Prostate gland (tissue), 2 donors: ENCODE measurements at regions of chr16 and their contacts with region 1.

Region 1: GRCh38 chr16:73047518-73048291 is at the start of gene ZFHX3:
- DNase-seq: peak; percentile 78
- H3K4me3 ChIP-seq: peak within 1 kb of the TSS; percentile 79 to 92
- H3K27ac ChIP-seq: peak within 1 kb of the TSS; percentile 97 to 100
- H3K4me1 ChIP-seq: peaks cover 46% of the 10 kb centered on the region
- H3K27me3 ChIP-seq: no peaks in the 10 kb centered on the region
- CTCF ChIP-seq: peak in 1 of 4 experiments; percentile 29
- POLR2A ChIP-seq: peak; percentile 11
- total RNA-seq, gene ZFHX3: 51.1 to 53.9 TPM

Region 2: DNA sequence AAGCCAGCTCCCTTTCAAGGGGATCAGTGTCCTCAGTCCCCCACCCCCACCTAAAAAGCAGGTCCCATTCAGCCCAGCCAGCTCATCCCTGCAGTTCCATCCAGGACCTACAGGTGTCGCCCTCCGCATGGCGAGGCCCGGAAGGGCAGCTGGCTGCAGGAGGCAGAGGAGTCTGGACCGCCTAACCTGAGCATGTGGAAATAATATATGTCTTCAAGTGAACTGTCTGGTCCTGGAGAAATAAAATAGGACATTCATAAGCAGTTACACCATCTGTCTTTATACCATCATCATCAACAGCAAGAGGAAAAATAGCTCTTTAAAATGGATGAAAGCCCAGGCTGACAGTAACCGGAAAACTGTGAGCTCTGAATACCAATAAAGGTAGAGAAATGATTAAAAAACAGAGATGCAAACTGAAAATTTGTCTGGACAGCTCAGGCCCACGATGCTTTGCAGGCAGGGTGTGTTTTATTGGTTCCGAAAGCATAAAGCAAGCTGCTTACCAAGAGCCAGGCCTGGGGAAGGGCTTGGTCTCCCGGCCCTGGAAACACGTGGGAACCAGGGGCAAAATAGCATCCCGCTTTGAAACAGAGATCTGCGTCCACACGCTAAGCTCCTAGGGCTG is 215.0 kb before region 1 on chr16:
- intact Hi-C with region 1: loop called (anchors 5 kb)
- DNase-seq: peak; percentile 79
- H3K4me3 ChIP-seq: no peak overlapping the region
- H3K27ac ChIP-seq: peak overlapping the region; percentile 21 to 34
- H3K4me1 ChIP-seq: peaks cover 6% of the 10 kb centered on the region
- H3K27me3 ChIP-seq: no peaks in the 10 kb centered on the region
- CTCF ChIP-seq: peak; percentile 95 to 97 (median 96)
- POLR2A ChIP-seq: no peak

Region 3: DNA sequence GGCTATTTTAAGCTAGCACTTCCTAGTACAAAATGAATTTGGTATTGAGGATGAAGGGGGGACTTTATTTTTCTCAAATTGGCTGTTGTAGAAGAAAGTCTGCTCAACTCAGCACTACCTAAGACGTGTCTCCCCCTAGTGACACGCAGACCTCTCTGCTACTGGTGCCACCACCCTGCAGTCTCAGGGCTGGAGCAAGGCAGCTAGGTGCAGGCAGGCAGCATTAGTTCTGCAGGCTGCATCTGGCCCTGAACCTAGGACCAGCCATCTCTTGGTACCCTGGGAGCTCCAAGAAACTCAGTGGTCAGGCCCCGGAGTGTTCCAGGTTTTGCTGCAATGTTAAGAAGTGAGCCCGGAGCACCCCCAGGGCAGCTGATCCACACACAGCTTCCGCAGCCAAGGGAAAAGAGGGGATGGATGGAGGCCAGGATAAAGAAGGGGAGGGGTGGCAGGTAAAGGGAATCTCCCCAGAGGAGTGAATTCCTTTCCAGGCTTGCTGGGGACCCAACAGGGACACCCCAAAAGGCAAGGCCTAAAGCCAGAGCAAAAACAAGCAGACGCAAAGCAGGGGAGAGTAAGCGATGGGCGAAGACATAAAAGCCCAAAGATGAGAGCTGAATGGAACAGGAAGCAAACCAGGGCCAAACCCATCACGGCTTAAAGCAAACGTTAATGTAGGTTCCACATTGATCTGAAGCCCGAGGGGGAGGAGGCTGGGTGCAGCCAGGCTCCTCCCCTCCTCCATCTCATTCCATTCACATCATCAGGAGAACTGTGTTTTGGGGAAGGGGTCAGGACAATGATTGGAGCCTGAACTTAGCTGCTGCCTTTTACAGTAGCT is 200.3 kb before region 1 on chr16:
- intact Hi-C with region 1: loop called (anchors 5 kb)
- DNase-seq: no peak
- H3K4me3 ChIP-seq: no peak overlapping the region
- H3K27ac ChIP-seq: peak overlapping the region; percentile 71 to 72
- H3K4me1 ChIP-seq: peaks cover 19% of the 10 kb centered on the region
- H3K27me3 ChIP-seq: no peaks in the 10 kb centered on the region
- CTCF ChIP-seq: peak in 2 of 4 experiments; percentile 15 to 25
- POLR2A ChIP-seq: no peak

Region 4: DNA sequence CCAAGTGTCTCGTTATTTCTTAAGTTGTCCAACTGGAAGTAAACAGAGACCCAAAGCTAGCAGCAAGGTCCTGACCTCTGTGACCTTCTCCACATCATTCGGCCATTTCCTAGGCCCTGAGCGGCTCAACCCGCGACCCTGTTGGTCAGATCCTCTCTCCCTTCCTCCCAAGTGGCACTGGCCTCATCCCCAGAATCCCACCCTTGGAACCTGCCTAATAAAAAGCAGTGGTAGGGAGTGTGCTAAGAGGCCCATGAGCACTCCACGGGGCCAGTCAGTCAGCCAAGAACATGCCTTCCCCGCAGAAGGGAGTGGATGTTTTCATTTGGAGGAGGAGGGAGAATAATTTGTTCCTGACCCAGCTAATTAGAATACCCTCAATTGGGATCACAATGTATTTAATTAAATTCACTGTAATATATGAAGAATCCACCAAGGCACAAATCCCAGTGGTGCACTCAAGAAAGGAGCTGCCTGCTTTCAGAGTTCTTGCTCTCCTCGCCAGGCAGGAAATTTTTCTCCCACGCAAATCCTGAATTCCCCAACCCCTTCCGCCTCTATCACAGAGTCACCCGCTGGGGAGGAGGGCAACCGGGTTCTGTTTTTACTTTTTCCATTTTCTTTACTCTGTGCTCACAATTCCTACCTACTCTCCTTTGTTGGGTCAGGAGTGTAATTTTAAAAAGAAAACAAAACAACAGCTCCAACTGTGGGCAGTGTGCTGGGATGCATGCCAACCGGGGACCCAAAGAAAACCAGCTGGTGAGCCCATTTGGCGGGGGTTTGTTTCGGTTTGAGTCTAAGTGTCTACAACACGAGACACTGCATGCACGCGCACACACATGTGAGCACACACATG is 153.2 kb before region 1 on chr16:
- intact Hi-C with region 1: no loop called
- DNase-seq: no peak
- H3K4me3 ChIP-seq: no peak overlapping the region
- H3K27ac ChIP-seq: peak overlapping the region in 1 of 2 donors; percentile 13
- H3K4me1 ChIP-seq: no peaks in the 10 kb centered on the region
- H3K27me3 ChIP-seq: no peaks in the 10 kb centered on the region
- CTCF ChIP-seq: no peak
- POLR2A ChIP-seq: no peak

Region 5: GRCh38 chr16:72938795-72939164 is 108.9 kb before region 1 on chr16:
- intact Hi-C with region 1: loop called (anchors 5 kb)
- DNase-seq: peak; percentile 81
- H3K4me3 ChIP-seq: no peak overlapping the region
- H3K27ac ChIP-seq: peak overlapping the region; percentile 90 to 92
- H3K4me1 ChIP-seq: peaks cover 33% of the 10 kb centered on the region
- H3K27me3 ChIP-seq: no peaks in the 10 kb centered on the region
- CTCF ChIP-seq: no peak
- POLR2A ChIP-seq: no peak

Region 6: DNA sequence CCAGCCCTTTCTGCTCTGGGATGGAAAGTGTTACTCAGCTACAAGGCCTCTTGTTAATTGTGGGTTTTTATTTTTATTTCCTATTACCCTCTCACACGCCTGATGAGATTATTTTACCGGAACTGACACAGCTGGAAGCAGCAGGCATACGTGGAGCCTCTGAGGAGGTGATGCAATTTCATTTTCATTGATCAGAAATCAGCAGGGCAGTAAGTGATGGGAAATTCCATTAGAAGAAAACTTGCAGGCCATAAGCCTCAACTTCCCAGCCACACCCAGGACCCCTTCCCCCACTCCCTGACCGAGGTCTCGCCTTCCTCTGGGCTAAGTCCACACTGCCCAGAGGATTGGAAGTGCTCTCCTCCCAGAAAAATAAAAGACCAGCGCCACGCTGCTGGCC is 69.5 kb before region 1 on chr16:
- intact Hi-C with region 1: no loop called
- DNase-seq: no peak
- H3K4me3 ChIP-seq: no peak overlapping the region
- H3K27ac ChIP-seq: peak overlapping the region in 1 of 2 donors; percentile 35
- H3K4me1 ChIP-seq: peaks cover 12% of the 10 kb centered on the region
- H3K27me3 ChIP-seq: no peaks in the 10 kb centered on the region
- CTCF ChIP-seq: no peak
- POLR2A ChIP-seq: no peak